Lower leg skin (tissue), 4 donors: ENCODE measurements at regions of chr9 and their contacts with region 1.

Region 1: DNA sequence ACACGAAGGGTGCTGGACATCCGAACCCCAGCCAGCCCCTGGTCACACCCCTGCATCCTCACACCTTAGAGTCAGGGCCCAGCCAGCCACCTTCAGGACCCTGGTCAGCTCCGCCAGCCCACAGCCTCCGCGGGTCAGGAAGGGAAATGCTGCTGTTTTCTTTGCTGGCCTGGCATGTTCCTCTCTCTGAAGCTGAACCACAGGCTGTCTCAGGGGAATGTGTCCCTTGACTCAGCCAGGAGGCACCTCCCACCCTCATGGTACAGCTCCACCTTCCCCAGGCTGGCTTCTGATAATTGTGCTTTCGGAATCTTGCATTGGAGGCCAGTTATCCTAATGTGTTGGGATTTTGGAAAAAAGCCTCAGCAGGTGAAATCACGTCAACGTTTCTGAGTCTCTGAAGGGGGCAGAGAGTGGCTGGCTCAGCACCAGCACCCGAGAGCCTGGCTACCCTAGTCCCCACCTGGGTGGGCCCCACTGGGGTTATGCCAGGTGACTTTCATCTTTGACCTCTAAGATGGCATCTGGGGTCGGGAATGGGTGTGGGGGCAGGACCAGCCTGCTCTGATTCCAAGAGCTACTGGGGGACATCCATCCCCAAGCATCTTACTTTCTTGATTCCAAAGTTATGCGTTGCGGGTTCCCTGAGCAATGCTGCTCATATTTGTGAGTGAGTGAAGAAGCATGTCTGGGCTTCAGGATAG is 9.8 kb upstream of the OLFM1 start:
- DNase-seq: peak in 1 of 2 donors; percentile 82
- H3K4me3 ChIP-seq: no peak overlapping the region
- CTCF ChIP-seq: no peak
- POLR2A ChIP-seq: no peak

Region 2: DNA sequence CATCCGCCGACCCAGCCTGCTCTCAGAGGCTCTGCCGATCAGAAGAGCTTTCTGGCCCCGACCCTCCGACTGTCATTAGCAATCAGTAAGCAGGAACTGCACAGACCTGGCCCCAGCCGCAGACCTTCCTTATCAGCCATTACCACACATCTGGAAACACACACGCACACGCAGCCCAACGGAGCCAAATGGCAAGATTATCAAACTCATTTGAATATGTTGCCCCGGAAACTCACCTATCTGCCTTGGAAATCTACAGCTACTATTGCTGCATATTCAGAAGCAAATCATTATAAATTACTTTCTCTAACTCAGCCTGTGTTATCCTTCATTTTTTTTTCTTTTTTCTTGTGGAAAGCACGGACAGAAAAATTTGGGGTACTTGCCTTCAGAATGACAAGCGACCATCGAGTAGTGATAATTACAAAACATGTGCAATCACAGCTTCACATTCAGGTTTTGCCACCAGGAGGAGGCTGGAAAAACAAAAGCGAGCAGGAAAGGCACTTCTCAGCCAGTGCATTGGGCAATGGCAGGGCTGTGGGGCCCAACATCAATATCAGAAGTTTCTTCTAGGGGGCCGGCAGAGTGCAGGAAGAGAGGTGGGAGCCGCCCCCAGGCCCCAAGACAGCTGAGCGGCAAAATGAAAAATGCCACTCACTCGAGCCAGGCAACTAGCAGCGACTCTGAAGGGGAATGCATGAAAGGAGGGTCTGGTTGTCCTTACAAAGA is 1207.8 kb before region 1 on chr9:
- intact Hi-C with region 1: no loop called
- DNase-seq: no peak
- H3K4me3 ChIP-seq: no peak overlapping the region
- CTCF ChIP-seq: no peak
- POLR2A ChIP-seq: no peak

Region 3: GRCh38 chr9:134365791-134366688 is 711.6 kb before region 1 on chr9:
- intact Hi-C with region 1: no loop called
- DNase-seq: peak; percentile 94 to 98
- H3K4me3 ChIP-seq: no peak overlapping the region
- CTCF ChIP-seq: no peak
- POLR2A ChIP-seq: no peak

Region 4: GRCh38 chr9:134929193-134930158 is 148.2 kb before region 1 on chr9:
- intact Hi-C with region 1: no loop called
- DNase-seq: peak in 1 of 2 donors; percentile 49
- H3K4me3 ChIP-seq: no peak overlapping the region
- CTCF ChIP-seq: no peak
- POLR2A ChIP-seq: no peak

Region 5: DNA sequence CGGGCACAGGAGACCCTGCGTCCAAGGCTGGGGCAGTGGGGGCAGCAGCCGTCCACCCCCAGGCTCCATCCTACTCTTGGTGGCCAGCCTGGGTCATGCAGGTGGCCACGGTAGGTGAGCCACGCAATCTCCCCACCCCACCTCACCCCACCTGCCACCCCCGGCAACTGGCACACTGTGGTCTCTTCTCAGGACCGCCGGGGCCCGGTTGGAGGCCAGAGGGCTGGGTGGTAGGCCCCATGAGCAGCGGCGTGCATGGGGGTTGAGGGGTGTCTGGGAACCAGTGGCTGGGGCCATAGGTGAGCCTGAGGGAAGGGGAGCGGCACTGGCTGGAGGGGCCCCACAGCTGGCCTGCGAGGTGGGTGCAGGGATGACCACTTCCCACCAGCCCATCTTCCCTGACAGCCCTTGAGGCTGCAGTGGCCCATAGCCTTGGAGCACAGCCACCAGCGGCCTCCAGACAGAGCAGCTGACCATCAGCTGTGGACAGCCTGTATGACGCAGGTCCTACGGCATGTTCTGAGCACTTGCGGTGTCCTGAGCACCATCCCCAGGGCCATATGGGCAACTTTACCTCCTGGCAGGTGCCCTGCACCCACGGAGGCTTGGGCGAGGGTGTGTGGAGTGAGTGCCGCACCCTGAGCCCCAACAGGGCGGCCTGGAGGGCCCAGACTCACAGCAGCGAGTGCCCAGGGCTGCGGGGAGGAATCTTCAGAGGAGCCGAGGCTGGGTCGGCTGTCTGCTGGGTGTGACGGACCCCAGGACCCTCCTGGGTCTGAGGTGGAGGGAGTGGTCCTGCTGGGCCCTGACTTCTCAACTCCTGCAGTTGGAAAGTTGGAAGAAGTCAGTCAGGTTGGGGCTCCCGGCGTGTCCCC is 671.8 kb after region 1 on chr9:
- intact Hi-C with region 1: loop called (anchors 5 kb)
- DNase-seq: no peak
- H3K4me3 ChIP-seq: no peak overlapping the region
- CTCF ChIP-seq: no peak
- POLR2A ChIP-seq: no peak